Panc1 (cell line): ENCODE measurements at regions of chr3 and their contacts with region 1.

Region 1: GRCh38 chr3:52313774-52314188 is 2.3 kb upstream of the DNAH1 start:
- DNase-seq: no peak
- ATAC-seq: peak; percentile 53
- H3K4me3 ChIP-seq: no peak overlapping the region
- H3K27ac ChIP-seq: 0 out of 2 replicates have a peak overlapping the region, but pooled peaks have one; percentile 7
- H3K4me1 ChIP-seq: peaks cover 12% of the 10 kb centered on the region
- H3K27me3 ChIP-seq: no peaks in the 10 kb centered on the region
- CTCF ChIP-seq: no peak

Region 2: DNA sequence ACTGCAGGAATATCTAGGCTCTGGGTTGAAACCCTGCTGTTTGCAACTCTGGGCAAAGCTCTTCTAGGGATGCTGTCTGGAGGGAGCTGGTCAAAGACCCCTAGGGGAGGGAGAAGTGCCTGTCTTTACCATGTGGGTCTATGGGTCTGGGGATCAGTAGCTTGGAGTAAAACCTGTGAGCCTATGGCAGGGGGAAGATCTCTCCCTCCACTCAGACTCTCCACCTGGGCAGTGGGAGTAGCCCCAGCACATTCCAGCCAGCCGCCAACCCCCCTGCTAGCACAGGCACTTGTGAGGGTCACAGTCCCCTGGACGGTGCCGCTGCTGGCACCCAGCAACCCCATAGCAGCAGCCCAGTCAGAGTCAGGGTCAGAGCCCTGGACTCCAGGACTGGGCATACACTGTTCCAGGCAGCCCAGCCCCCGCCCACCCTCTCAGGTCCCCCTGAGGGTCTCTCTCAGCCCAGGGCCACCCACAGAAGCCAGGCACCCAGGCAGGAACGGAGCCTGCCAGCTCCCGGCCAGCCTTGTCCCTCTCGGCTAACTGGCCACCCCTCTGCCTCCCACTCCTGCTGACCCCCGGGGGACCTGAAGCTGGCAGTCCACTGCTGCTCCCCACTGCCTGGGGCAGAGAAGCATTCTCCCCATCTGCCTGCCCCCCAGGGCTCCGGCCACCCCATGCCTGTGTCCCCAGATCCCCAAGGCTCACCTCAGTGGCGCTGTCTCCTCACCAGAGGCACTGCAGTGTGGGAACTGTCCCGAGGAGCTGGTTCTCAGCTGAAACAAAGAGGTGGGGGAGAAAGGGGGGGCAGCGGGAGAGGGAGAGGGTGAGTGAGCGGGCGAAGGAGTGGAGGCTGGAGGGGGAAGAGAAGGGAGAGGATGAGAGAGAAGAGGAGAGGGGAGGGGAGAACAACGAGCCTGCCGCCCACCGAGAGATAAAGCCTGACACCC is 15.4 kb before region 1 on chr3:
- CTCF ChIA-PET with region 1: interaction called, 12 read pairs
- POLR2A ChIA-PET with region 1: no interaction called
- in situ Hi-C with region 1: no loop called
- intact Hi-C with region 1: no loop called
- DNase-seq: no peak
- ATAC-seq: no peak
- H3K4me3 ChIP-seq: no peak overlapping the region
- H3K27ac ChIP-seq: no peak overlapping the region
- H3K4me1 ChIP-seq: peaks cover 13% of the 10 kb centered on the region
- H3K27me3 ChIP-seq: no peaks in the 10 kb centered on the region
- CTCF ChIP-seq: no peak